H1 (cell line): ENCODE measurements at regions of chr9 and their contacts with region 1.

Region 1: DNA sequence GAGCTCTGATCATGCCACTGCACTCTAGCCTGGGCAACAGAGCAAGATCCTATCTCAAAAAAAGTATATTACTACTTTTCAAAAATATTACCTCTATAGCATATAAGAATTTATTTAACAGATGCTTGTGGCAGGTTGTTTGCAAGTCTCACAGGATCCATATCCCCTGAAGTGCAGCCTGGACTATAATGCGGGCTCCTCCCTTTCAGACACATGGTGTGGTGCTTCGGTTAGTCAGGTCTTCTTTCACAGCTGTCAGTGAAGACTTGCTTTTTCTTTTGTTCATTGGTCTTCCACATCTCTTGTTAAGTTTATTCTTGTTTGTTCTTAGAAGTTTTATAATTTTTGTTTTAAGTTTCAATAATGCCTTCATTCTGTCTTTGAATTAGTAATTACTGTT is 9.4 kb upstream of the HRCT1 start:
- DNase-seq: no peak
- H3K4me3 ChIP-seq: no peak overlapping the region
- H3K27ac ChIP-seq: no peak overlapping the region
- H3K4me1 ChIP-seq: no peaks in the 10 kb centered on the region
- H3K27me3 ChIP-seq: no peaks in the 10 kb centered on the region
- CTCF ChIP-seq: no peak
- EP300 ChIP-seq: no peak
- POLR2A ChIP-seq: no peak
- RAD21 ChIP-seq: no peak

Region 2: GRCh38 chr9:35910613-35911359 is 14.2 kb after region 1 on chr9:
- CTCF ChIA-PET with region 1: interaction called, 11 read pairs
- POLR2A ChIA-PET with region 1: interaction called, 3 read pairs
- DNase-seq: peak in 1 of 2 experiments; percentile 55
- H3K4me3 ChIP-seq: no peak overlapping the region
- H3K27ac ChIP-seq: no peak overlapping the region
- H3K4me1 ChIP-seq: peaks cover 9 to 33% (median 21%) of the 10 kb centered on the region in 4 experiments
- H3K27me3 ChIP-seq: no peaks in the 10 kb centered on the region; a peak in 2 of 7 replicates
- CTCF ChIP-seq: peak; percentile 47 to 64 (median 56)
- EP300 ChIP-seq: no peak
- POLR2A ChIP-seq: no peak
- RAD21 ChIP-seq: peak; percentile 73 to 74

Region 3: DNA sequence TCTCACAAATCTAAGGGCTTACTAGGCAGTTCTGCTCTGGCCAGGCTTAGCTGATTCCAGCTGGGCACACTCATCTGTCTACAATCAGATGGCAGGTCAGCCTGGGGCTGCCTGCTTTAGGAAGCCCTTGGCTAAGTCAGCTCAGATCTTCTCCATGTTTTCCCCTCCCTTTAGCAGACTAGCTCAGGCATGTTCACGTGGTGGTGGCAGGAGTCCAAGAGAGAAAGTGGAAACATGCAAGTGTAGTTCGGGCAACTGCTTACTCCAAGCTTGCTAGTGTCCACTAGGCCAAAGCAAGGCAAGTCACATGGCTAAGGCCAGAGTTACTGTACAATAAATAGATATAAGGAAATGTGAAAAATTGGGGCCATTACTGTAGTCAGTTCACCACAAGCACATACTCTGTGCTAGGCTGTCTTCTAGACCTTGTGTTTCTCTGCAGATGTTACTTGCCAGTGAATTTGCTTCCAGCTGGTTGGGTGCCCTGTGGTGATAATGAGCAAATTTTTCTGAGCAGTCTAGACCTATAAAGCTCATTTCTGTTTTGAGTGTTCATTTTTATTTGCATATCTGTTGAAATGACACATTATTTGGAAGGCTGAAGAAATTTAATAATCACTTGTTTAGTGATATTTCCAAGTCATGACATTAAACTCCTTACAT is 178.4 kb after region 1 on chr9:
- CTCF ChIA-PET with region 1: no interaction called
- POLR2A ChIA-PET with region 1: no interaction called
- DNase-seq: no peak
- H3K4me3 ChIP-seq: no peak overlapping the region
- H3K27ac ChIP-seq: no peak overlapping the region
- H3K4me1 ChIP-seq: no peaks in the 10 kb centered on the region
- H3K27me3 ChIP-seq: no peaks in the 10 kb centered on the region
- CTCF ChIP-seq: no peak
- EP300 ChIP-seq: no peak
- POLR2A ChIP-seq: no peak
- RAD21 ChIP-seq: no peak